ENCODE measurements at regions of chr4 and their contacts with region 1.

Region 1: DNA sequence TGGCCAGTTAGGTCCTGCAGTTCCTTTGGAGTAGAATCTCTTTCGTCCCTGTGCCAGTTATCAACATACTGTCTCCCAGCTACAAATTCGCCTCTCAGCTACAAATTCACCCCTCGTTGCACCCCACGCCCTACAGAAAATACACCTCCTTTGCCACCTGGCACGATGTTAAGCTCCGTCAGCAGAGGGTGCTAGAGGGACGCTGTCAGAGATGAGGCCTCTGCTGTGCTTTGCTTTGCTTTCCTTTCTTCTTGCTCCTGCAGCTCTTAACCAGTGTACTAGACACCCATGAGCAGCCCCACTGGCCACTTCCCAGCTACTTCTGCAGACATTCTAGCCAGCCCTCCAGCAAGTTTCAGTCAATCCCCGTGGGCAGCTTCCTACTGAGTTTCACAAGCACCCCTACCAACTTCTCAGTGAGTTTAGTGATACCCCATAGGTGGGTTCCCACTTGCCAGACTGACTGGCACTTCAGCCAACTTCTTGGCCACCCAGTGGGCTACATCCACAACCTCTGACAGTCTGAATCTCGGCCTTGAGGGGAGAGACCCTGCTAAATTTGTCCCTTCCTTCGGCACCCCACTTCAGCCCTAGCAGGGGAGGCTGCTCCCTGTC is 21.8 kb downstream of the HAUS3 start:
- DNase-seq: no peak
- H3K4me3 ChIP-seq: no peak overlapping the region
- H3K27me3 ChIP-seq: peaks cover 2% of the 10 kb centered on the region
- CTCF ChIP-seq: peak; percentile 94

Region 2: GRCh38 chr4:2141762-2142451 is 78.2 kb before region 1 on chr4:
- CTCF ChIA-PET with region 1: no interaction called
- POLR2A ChIA-PET with region 1: no interaction called
- DNase-seq: no peak
- H3K4me3 ChIP-seq: no peak overlapping the region
- H3K27me3 ChIP-seq: no peaks in the 10 kb centered on the region
- CTCF ChIP-seq: no peak

Region 3: GRCh38 chr4:2241410-2242353 is 21.6 kb after region 1 on chr4 and contains the starts of genes HAUS3 and POLN:
- CTCF ChIA-PET with region 1: interaction called, 19 read pairs
- POLR2A ChIA-PET with region 1: no interaction called
- DNase-seq: peak; percentile 73
- H3K4me3 ChIP-seq: peak within 1 kb of the TSS; percentile 84
- H3K27me3 ChIP-seq: no peaks in the 10 kb centered on the region
- CTCF ChIP-seq: no peak
- polyA plus RNA-seq, gene HAUS3: 1.9 and 4.0 TPM in 2 replicates
- polyA plus RNA-seq, gene POLN: 0.91 and 1.5 TPM in 2 replicates

Region 4: GRCh38 chr4:2436301-2436700 is 216.2 kb after region 1 on chr4:
- CTCF ChIA-PET with region 1: interaction called, 42 read pairs
- POLR2A ChIA-PET with region 1: no interaction called
- DNase-seq: no peak
- H3K4me3 ChIP-seq: no peak overlapping the region
- H3K27me3 ChIP-seq: 0 out of 2 replicates have a peak, but pooled peaks cover 2% of the 10 kb centered on the region
- CTCF ChIP-seq: peak; percentile 54

Region 5: GRCh38 chr4:2462218-2462991 is 242.3 kb after region 1 on chr4:
- CTCF ChIA-PET with region 1: interaction called, 15 read pairs
- POLR2A ChIA-PET with region 1: no interaction called
- DNase-seq: no peak
- H3K4me3 ChIP-seq: peak overlapping the region; percentile 35
- H3K27me3 ChIP-seq: peaks cover 1% of the 10 kb centered on the region; the same call in 1 of the 2 replicates
- CTCF ChIP-seq: no peak

Measured in BJ (cell line).